SK-N-SH (cell line): ENCODE measurements at regions of chrX and their contacts with region 1.

Region 1: DNA sequence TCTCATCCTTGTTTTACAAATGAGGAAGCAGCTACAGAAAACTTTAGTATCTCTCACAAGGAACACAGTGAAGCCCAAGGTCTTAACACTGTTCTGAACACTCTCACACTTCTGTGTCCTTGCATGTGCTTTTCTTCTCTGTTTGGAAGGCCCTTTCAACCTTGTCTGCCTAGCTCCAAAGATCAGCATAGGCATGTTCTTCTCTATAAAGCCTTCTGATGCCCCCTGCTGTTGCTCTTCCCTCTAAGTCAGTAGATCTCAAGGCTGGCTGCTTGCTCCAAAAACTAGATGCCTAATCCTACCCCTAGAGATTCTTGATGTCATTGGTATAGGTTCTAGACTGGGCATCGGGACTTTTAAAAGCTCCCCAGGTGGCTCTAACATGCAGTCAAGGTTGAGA is 5.9 kb downstream of the APOO start:
- DNase-seq: peak; percentile 49
- H3K4me3 ChIP-seq: peak overlapping the region in 1 of 2 experiments; percentile 25; a peak in 2 of 4 replicates
- H3K27ac ChIP-seq: peak overlapping the region; percentile 34 to 55; a peak in 3 of 4 replicates
- H3K4me1 ChIP-seq: peaks cover 3 to 10% of the 10 kb centered on the region in 2 experiments; a peak in 3 of 4 replicates
- H3K27me3 ChIP-seq: no peaks in the 10 kb centered on the region
- CTCF ChIP-seq: peak; percentile 63
- EP300 ChIP-seq: no peak
- RAD21 ChIP-seq: peak; percentile 74

Region 2: DNA sequence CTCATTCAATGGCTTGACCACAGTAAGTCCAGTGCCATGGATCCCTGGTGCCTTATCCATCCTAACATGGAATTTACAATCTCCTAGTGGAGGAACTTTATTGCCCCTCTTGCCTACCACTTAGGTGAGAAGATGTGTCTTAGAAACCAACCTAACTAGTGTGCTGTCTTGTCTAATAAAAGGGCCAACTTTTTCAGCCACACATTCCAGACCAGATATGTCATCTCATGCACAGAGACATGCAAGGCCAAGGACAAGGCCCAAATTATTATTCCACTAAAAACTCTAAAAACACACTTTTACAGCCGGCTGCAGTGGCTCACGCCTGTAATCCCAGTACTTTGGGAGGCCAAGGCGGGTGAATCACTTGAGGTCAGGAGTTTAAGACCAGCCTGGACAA is 245.1 kb before region 1 on chrX:
- CTCF ChIA-PET with region 1: no interaction called
- POLR2A ChIA-PET with region 1: no interaction called
- DNase-seq: no peak
- H3K4me3 ChIP-seq: no peak overlapping the region
- H3K27ac ChIP-seq: no peak overlapping the region
- H3K4me1 ChIP-seq: no peaks in the 10 kb centered on the region; a peak in 1 of 4 replicates
- H3K27me3 ChIP-seq: peaks cover 16% of the 10 kb centered on the region; the same call in 1 of the 2 replicates
- CTCF ChIP-seq: no peak
- EP300 ChIP-seq: no peak
- RAD21 ChIP-seq: no peak

Region 3: DNA sequence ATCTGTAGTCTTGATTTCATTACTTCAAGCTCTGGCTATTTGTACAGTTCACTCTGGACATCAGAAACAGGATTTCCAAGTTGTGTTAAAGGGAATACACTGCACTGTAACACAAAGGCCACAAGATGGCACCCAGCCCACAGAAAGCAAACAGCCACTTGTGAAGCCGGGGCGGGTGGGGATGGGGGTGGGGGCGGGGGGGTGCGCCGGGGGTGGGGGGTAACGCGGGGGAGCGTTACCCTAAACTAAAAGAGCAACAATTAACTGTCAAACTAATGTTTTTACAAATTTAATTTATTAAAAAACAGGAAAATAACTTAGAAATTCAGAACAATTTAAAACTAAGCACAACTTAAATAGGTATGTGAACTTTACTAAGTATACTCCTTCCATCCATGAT is 207.2 kb before region 1 on chrX:
- CTCF ChIA-PET with region 1: interaction called, 67 read pairs
- POLR2A ChIA-PET with region 1: interaction called, 3 read pairs
- DNase-seq: peak; percentile 67
- H3K4me3 ChIP-seq: no peak overlapping the region
- H3K27ac ChIP-seq: no peak overlapping the region
- H3K4me1 ChIP-seq: no peaks in the 10 kb centered on the region
- H3K27me3 ChIP-seq: peaks cover 9% of the 10 kb centered on the region
- CTCF ChIP-seq: peak; percentile 61
- EP300 ChIP-seq: no peak
- RAD21 ChIP-seq: peak; percentile 71

Region 4: GRCh38 chrX:23742697-23743622 is 158.8 kb before region 1 on chrX and contains the start of gene ACOT9:
- CTCF ChIA-PET with region 1: interaction called, 15 read pairs
- POLR2A ChIA-PET with region 1: no interaction called
- DNase-seq: peak; percentile 92
- H3K4me3 ChIP-seq: peak within 1 kb of the TSS; percentile 58 to 72
- H3K27ac ChIP-seq: peak within 1 kb of the TSS; percentile 59 to 91
- H3K4me1 ChIP-seq: no peaks in the 10 kb centered on the region
- H3K27me3 ChIP-seq: peaks cover 3% of the 10 kb centered on the region; the same call in 1 of the 2 replicates
- CTCF ChIP-seq: no peak
- EP300 ChIP-seq: no peak
- RAD21 ChIP-seq: no peak
- polyA plus RNA-seq, gene ACOT9: 23.7 and 32.4 TPM in 2 replicates

Region 5: DNA sequence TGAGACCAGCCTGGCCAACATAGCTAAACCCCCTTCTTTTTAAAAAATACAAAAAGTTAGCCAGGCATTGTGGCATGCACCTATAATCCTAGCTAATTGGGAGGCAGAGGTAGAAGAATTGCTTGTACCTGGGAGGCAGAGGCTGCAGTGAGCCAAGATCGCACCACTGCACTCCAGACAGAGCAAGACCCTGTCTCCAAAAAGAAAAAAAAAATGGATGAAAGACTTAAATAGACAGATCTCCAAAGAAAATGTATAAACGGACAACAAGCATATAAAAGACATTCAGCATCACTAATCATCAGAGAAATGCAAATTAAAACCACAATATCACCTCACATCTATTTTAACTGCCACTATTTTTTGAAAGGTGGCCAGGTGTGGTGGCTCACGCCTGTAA is 125.4 kb before region 1 on chrX:
- CTCF ChIA-PET with region 1: interaction called, 63 read pairs
- POLR2A ChIA-PET with region 1: no interaction called
- DNase-seq: no peak
- H3K4me3 ChIP-seq: no peak overlapping the region
- H3K27ac ChIP-seq: no peak overlapping the region
- H3K4me1 ChIP-seq: no peaks in the 10 kb centered on the region
- H3K27me3 ChIP-seq: no peaks in the 10 kb centered on the region; the same call in 1 of the 2 replicates
- CTCF ChIP-seq: no peak
- EP300 ChIP-seq: no peak
- RAD21 ChIP-seq: no peak

Region 6: GRCh38 chrX:23792861-23793553 is 108.8 kb before region 1 on chrX:
- CTCF ChIA-PET with region 1: interaction called, 11 read pairs
- POLR2A ChIA-PET with region 1: no interaction called
- DNase-seq: no peak
- H3K4me3 ChIP-seq: no peak overlapping the region
- H3K27ac ChIP-seq: no peak overlapping the region
- H3K4me1 ChIP-seq: no peaks in the 10 kb centered on the region
- H3K27me3 ChIP-seq: peaks cover 7% of the 10 kb centered on the region; the same call in 1 of the 2 replicates
- CTCF ChIP-seq: no peak
- EP300 ChIP-seq: no peak
- RAD21 ChIP-seq: no peak

Region 7: GRCh38 chrX:23844502-23845138 is 57.2 kb before region 1 on chrX:
- CTCF ChIA-PET with region 1: interaction called, 13 read pairs
- POLR2A ChIA-PET with region 1: no interaction called
- DNase-seq: peak; percentile 41
- H3K4me3 ChIP-seq: no peak overlapping the region
- H3K27ac ChIP-seq: peak overlapping the region in 1 of 2 experiments; percentile 39; a peak in 1 of 4 replicates
- H3K4me1 ChIP-seq: peaks cover 0 to 3% of the 10 kb centered on the region in 2 experiments; a peak in 1 of 4 replicates
- H3K27me3 ChIP-seq: no peaks in the 10 kb centered on the region; the same call in 1 of the 2 replicates
- CTCF ChIP-seq: no peak
- EP300 ChIP-seq: no peak
- RAD21 ChIP-seq: no peak